PC-3 (cell line): ENCODE measurements at regions of chr7 and their contacts with region 1.

Region 1: GRCh38 chr7:129952653-129953560 is at the start of gene UBE2H:
- DNase-seq: peak; percentile 93
- ATAC-seq: peak; percentile 38
- H3K4me3 ChIP-seq: peak within 1 kb of the TSS; percentile 95
- H3K27ac ChIP-seq: peak within 1 kb of the TSS; percentile 95
- H3K4me1 ChIP-seq: peaks cover 37% of the 10 kb centered on the region
- H3K27me3 ChIP-seq: no peaks in the 10 kb centered on the region
- CTCF ChIP-seq: no peak
- total RNA-seq, gene UBE2H: 62.5 and 102 TPM in 2 replicates

Region 2: GRCh38 chr7:129664029-129665012 is 288.6 kb before region 1 on chr7:
- CTCF ChIA-PET with region 1: no interaction called
- POLR2A ChIA-PET with region 1: no interaction called
- intact Hi-C with region 1: loop called (anchors 10 kb)
- DNase-seq: peak; percentile 68
- ATAC-seq: peak; percentile 76
- H3K4me3 ChIP-seq: no peak overlapping the region
- H3K27ac ChIP-seq: peak overlapping the region; percentile 68
- H3K4me1 ChIP-seq: peaks cover 30% of the 10 kb centered on the region
- H3K27me3 ChIP-seq: no peaks in the 10 kb centered on the region
- CTCF ChIP-seq: peak; percentile 77

Region 3: GRCh38 chr7:129853661-129854300 is 99.1 kb before region 1 on chr7:
- CTCF ChIA-PET with region 1: no interaction called
- POLR2A ChIA-PET with region 1: interaction called, 5 read pairs
- intact Hi-C with region 1: loop called (anchors 5 kb)
- DNase-seq: peak; percentile 75
- ATAC-seq: peak; percentile 63
- H3K4me3 ChIP-seq: peak overlapping the region; percentile 50
- H3K27ac ChIP-seq: peak overlapping the region; percentile 83
- H3K4me1 ChIP-seq: peaks cover 41% of the 10 kb centered on the region
- H3K27me3 ChIP-seq: no peaks in the 10 kb centered on the region
- CTCF ChIP-seq: no peak

Region 4: GRCh38 chr7:129864042-129864441 is 88.9 kb before region 1 on chr7:
- CTCF ChIA-PET with region 1: no interaction called
- POLR2A ChIA-PET with region 1: no interaction called
- intact Hi-C with region 1: no loop called
- DNase-seq: no peak
- ATAC-seq: no peak
- H3K4me3 ChIP-seq: no peak overlapping the region
- H3K27ac ChIP-seq: no peak overlapping the region
- H3K4me1 ChIP-seq: no peaks in the 10 kb centered on the region; the same call in 1 of the 2 replicates
- H3K27me3 ChIP-seq: no peaks in the 10 kb centered on the region
- CTCF ChIP-seq: no peak

Region 5: DNA sequence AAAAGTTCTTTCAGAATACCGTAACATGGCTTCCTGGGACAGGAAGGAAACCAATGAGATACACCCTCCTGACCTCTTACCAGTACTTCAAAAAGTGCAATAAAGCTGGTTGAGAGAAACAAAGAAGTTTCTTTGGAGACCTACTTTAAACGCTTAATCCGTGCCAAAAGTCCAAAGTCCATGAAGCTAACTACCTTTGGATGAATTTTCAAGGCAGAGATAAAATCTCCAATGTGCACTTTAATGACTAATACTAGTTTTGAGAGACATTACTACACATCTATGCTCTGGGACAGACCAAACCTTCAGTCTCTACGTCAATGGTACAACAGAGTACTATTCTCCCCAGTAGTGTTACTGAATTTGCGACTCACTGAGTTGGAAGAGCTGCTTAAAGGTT is 46.2 kb before region 1 on chr7:
- CTCF ChIA-PET with region 1: no interaction called
- POLR2A ChIA-PET with region 1: no interaction called
- intact Hi-C with region 1: loop called (anchors 2 kb)
- DNase-seq: peak; percentile 87
- ATAC-seq: peak; percentile 87
- H3K4me3 ChIP-seq: peak overlapping the region; percentile 15; the same call in 1 of the 2 replicates
- H3K27ac ChIP-seq: peak overlapping the region; percentile 94
- H3K4me1 ChIP-seq: peaks cover 49% of the 10 kb centered on the region
- H3K27me3 ChIP-seq: no peaks in the 10 kb centered on the region
- CTCF ChIP-seq: no peak

Region 6: DNA sequence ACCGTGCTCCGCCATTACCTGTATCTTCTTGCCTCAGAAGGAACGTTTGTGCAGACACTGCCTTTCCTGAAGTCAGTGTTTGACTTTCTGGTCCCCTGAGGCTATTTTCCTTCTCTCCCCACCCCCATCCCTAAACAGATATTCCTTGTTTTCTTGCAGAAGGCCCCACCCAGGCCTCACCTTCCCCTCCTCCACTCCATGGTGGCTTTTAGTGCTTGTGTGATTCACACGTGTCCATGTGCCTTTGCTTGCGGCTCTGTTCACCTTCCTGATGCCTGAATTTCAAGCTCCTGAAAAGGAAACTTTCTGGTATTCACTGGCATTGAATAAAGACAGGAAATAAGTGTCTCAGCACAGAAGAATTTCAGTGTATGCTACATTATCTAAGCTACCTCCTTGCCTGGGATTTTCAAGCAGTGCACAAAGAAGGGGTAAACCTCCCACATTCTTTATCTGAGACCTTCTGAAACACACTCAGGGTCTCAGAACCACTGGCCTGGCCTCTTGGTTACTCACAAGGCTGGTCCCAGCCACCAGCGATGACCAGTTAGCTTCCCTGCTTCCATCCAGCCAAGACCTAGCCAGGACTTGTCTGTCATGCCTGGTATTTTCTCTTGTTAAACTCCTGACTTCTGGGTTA is 17.0 kb after region 1 on chr7:
- CTCF ChIA-PET with region 1: interaction called, 3 read pairs
- POLR2A ChIA-PET with region 1: interaction called, 8 read pairs
- intact Hi-C with region 1: loop called (anchors 1 kb)
- DNase-seq: peak; percentile 98
- ATAC-seq: peak; percentile 88
- H3K4me3 ChIP-seq: no peak overlapping the region
- H3K27ac ChIP-seq: peak overlapping the region; percentile 96
- H3K4me1 ChIP-seq: peaks cover 36% of the 10 kb centered on the region
- H3K27me3 ChIP-seq: no peaks in the 10 kb centered on the region
- CTCF ChIP-seq: no peak

Region 7: GRCh38 chr7:129993275-129993674 is 40.4 kb after region 1 on chr7:
- CTCF ChIA-PET with region 1: no interaction called
- POLR2A ChIA-PET with region 1: no interaction called
- intact Hi-C with region 1: no loop called
- DNase-seq: no peak
- ATAC-seq: no peak
- H3K4me3 ChIP-seq: no peak overlapping the region
- H3K27ac ChIP-seq: no peak overlapping the region
- H3K4me1 ChIP-seq: no peaks in the 10 kb centered on the region
- H3K27me3 ChIP-seq: no peaks in the 10 kb centered on the region
- CTCF ChIP-seq: no peak